SK-N-SH (cell line): ENCODE measurements at regions of chr7 and their contacts with region 1.

Region 1: DNA sequence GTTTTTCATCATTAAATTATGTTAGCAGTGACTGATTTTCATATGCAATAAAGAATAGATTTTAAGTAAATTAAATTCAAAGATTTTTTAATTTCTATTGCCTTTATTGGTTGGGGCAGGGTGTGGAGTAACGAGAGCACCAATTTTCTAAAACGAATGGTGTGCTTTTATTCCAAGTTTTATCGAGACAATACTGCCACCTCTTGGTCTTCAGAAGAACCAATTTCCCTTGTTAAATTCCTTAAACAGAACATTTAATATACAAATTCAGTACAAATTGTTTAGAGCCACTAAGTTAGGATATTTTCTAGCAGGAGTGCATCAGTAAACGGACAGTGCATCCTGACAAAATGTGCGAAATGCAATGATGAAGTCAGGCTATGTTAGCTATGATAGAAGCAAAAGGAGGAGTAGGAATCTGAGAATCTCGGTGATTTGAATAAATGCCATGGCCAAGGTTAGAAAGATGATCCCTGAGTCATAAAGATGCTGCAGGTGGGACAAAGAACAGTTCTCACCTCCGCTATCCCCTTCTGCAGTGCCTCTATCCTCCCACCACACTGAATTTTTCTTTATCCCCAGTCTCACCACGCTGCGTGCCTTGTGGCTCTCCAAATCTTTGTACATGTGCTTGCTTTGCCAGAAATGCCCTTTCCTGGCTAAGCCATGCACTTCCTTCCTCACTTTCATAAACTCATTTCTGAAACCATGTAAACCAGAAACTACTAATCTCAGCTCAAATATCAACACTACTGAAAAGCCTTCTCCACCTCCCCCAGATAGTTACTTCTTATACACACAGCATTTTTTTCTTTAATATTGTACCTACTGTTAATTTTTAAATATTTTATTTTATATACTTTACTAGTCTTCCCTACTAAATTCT is 31.9 kb upstream of the AGBL3 start:
- DNase-seq: peak; percentile 44
- H3K4me3 ChIP-seq: no peak overlapping the region
- H3K27ac ChIP-seq: no peak overlapping the region
- H3K4me1 ChIP-seq: no peaks in the 10 kb centered on the region
- H3K27me3 ChIP-seq: no peaks in the 10 kb centered on the region
- CTCF ChIP-seq: peak; percentile 79
- EP300 ChIP-seq: no peak
- RAD21 ChIP-seq: peak; percentile 86

Region 2: GRCh38 chr7:134640842-134641715 is 313.4 kb before region 1 on chr7:
- CTCF ChIA-PET with region 1: interaction called, 10 read pairs
- POLR2A ChIA-PET with region 1: no interaction called
- DNase-seq: no peak
- H3K4me3 ChIP-seq: no peak overlapping the region
- H3K27ac ChIP-seq: no peak overlapping the region
- H3K4me1 ChIP-seq: peaks cover 10 to 11% of the 10 kb centered on the region in 2 experiments; a peak in 2 of 4 replicates
- H3K27me3 ChIP-seq: no peaks in the 10 kb centered on the region
- CTCF ChIP-seq: no peak
- EP300 ChIP-seq: no peak
- RAD21 ChIP-seq: no peak

Region 3: GRCh38 chr7:134646425-134647305 is 307.8 kb before region 1 on chr7 and contains the start of gene BPGM:
- CTCF ChIA-PET with region 1: interaction called, 11 read pairs
- POLR2A ChIA-PET with region 1: no interaction called
- DNase-seq: peak; percentile 94
- H3K4me3 ChIP-seq: peak within 1 kb of the TSS; percentile 75 to 79
- H3K27ac ChIP-seq: peak within 1 kb of the TSS; percentile 80 to 81
- H3K4me1 ChIP-seq: peaks cover 11 to 15% of the 10 kb centered on the region in 2 experiments; a peak in 3 of 4 replicates
- H3K27me3 ChIP-seq: no peaks in the 10 kb centered on the region
- CTCF ChIP-seq: peak; percentile 56
- EP300 ChIP-seq: no peak
- RAD21 ChIP-seq: peak; percentile 10; the same call in 1 of the 2 replicates
- polyA plus RNA-seq, gene BPGM: 12.4 and 17.4 TPM in 2 replicates

Region 4: GRCh38 chr7:134943764-134944400 is 10.6 kb before region 1 on chr7:
- CTCF ChIA-PET with region 1: interaction called, 32 read pairs
- POLR2A ChIA-PET with region 1: no interaction called
- DNase-seq: peak; percentile 74
- H3K4me3 ChIP-seq: no peak overlapping the region
- H3K27ac ChIP-seq: no peak overlapping the region; a peak in 1 of 4 replicates
- H3K4me1 ChIP-seq: peaks cover 7 to 12% of the 10 kb centered on the region in 2 experiments; a peak in 2 of 4 replicates
- H3K27me3 ChIP-seq: no peaks in the 10 kb centered on the region
- CTCF ChIP-seq: peak; percentile 65
- EP300 ChIP-seq: no peak
- RAD21 ChIP-seq: peak; percentile 94

Region 5: DNA sequence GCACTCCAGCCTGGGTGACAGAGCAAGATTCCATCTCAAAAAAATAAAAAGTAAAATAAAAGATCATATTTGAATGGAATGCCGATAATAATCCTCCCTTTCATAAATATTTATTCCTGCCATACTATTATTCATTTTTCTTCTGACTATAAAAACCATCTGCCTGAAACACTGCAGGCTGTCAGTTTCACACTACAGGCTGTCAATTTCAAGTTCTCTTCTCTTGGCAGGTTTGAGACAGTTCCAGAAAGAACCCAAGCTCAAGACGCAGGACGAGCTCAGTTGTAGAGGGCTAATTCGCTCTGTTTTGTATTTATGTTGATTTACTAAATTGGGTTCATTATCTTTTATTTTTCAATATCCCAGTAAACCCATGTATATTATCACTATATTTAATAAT is 13.7 kb after region 1 on chr7:
- CTCF ChIA-PET with region 1: interaction called, 14 read pairs
- POLR2A ChIA-PET with region 1: no interaction called
- DNase-seq: no peak
- H3K4me3 ChIP-seq: no peak overlapping the region
- H3K27ac ChIP-seq: no peak overlapping the region
- H3K4me1 ChIP-seq: no peaks in the 10 kb centered on the region
- H3K27me3 ChIP-seq: no peaks in the 10 kb centered on the region
- CTCF ChIP-seq: no peak
- EP300 ChIP-seq: no peak
- RAD21 ChIP-seq: no peak

Region 6: DNA sequence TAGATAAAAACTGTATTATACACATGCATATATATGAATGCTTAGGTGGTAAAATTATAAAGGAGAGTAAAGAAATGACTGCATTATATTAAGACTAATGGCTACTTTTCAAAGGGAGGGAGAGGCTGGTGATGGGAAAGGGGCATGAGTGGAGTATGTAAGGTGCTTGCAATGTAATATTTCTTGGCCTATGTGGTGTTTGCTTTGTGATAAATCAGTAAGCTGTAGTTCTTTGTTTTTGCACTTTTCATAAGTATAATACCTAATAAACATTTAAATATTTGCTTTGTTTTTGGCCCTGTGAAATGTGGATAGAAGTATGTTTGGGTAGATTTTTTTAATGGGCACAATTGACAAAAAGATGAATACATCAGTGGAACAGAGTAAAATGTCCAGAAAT is 57.8 kb after region 1 on chr7:
- CTCF ChIA-PET with region 1: no interaction called
- POLR2A ChIA-PET with region 1: no interaction called
- DNase-seq: no peak
- H3K4me3 ChIP-seq: no peak overlapping the region
- H3K27ac ChIP-seq: no peak overlapping the region
- H3K4me1 ChIP-seq: no peaks in the 10 kb centered on the region
- H3K27me3 ChIP-seq: no peaks in the 10 kb centered on the region
- CTCF ChIP-seq: no peak
- EP300 ChIP-seq: no peak
- RAD21 ChIP-seq: no peak